Activated B cell treated with CpG ODN at 0.5 μM for 24 hours (primary cell): ENCODE measurements at regions of chr6 and their contacts with region 1.

Region 1: DNA sequence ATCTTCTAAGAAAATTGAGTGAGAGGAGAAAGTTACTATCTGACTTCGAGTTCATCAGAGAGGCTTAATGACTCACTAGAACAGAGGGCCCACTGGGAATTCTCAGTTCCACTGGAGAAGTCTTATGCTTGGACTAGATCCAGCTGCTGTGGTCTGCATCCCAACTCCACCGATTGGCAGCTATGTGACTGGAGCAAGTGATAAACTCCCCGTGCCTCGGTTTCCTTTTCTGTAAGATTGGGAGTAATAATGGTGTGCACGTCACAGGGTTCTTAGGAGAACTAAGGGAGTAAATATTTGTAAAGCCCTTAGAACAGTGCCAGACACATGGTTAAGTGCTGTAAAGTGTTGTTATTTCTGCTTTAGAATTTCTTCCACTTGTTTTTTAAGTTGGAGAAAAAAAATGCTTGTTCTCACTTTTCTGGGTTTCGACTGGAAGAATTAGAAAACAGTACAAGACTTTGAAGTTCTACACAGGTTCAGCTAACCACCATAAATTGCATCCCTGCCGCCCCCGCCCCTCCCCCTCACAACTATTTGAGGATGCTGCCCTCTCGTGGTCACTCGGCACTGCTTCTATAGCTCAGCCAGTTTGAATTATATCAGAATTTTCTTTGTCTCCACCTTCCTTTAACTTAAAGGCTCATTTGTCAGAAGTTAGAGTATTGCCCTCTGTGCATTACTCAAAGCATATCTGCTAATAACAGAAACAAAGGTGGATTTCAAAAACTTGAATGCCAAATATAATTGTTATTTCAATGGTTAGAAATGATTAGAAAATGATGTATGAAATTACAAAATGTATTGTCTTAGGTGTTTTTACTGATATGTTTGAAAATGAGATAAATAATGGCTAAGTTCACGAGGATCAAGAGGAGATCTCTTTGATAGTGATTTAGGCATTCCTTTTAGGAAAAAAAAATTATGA is 95.0 kb upstream of the IFNGR1 start:
- DNase-seq: peak; percentile 31
- ATAC-seq: peak; percentile 90
- H3K4me3 Mint-ChIP-seq: no peak overlapping the region
- H3K27ac Mint-ChIP-seq: no peak overlapping the region
- H3K4me1 Mint-ChIP-seq: peaks cover 30% of the 10 kb centered on the region
- H3K27me3 Mint-ChIP-seq: no peaks in the 10 kb centered on the region
- CTCF ChIP-seq: peak; percentile 66

Region 2: DNA sequence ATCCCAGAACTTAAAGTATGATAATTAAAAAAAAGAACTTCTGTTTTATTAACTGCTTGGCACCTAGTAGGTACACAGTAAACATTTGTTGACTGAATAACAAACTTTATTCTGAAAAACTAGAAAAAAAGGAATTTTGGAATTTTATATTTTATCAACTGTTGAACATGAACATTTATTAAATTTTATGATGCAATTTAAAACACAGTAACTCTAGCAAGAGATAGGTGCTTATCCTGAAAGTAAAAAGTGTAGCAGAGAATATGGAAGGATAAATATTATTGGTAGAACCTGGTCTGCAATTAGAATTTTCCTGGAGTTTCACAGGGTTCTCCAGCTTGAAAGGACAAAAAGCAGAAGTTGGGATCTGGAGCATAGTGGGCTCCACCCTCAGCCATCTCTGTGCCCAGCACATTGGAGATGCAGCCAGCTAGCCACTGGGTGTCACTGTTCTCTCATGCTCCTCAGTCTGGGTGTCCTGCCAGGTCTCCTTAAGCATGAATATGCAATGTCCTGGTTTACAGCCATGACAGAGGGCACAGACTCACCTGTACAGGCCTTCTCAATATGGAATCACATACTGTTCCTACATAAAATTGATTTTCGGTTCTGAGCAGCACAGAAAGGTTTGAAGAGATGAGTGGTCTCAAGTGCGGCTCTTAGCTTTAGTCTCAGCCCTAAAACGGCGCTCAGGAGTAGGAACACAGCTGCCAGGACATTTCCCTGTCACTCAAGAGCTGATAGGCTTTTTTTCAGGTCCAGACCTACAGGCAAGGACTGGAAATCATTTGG is 237.7 kb before region 1 on chr6:
- CTCF ChIA-PET with region 1: interaction called, 44 read pairs
- POLR2A ChIA-PET with region 1: no interaction called
- intact Hi-C with region 1: loop called (anchors 1 kb)
- DNase-seq: peak; percentile 39
- ATAC-seq: peak; percentile 100
- H3K4me3 Mint-ChIP-seq: no peak overlapping the region
- H3K27ac Mint-ChIP-seq: no peak overlapping the region
- H3K4me1 Mint-ChIP-seq: peaks cover 2% of the 10 kb centered on the region
- H3K27me3 Mint-ChIP-seq: peaks cover 2% of the 10 kb centered on the region
- CTCF ChIP-seq: peak; percentile 77

Region 3: DNA sequence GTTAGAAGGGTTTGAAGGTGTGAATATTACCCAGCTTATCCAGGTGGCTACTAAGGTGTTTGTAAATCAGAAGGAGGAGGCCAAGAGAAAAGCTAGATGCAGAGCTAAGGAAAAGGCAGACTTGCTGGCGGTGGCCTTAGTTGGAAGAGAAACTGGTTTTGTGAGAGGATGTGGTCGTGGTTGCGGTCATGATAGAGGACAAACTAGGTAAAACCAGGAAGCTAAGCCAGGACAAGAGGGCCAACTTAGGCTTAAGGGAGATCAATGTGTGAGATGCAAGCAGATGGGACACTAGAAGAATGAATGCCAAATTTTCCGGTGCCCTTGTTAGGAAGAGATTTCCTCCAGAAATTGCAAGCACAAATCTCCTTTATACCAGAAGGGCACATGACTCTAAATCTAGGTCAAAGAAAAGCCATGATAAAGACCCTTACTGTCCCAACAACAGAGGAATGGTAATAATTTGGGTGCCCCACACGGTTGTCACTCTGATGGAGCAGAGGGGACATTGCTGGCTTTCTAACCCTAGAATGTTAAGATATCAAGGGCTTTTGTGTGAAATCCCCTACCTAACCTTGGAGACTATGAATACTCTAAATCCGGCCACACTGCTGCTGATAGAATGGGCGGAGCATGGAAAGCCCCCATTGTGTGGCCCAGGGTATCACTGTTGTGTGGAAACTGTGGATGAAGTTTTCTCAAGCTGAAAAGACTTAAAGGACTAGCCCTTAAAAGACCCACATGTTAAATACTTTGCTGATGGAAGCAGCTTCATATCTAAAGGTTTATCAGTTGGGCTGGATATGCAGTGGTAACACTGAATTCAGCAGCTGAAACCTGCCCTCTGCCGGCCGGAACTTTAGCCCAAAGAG is 148.6 kb before region 1 on chr6:
- CTCF ChIA-PET with region 1: interaction called, 18 read pairs
- POLR2A ChIA-PET with region 1: interaction called, 3 read pairs
- intact Hi-C with region 1: loop called (anchors 1 kb)
- DNase-seq: peak; percentile 28
- ATAC-seq: peak; percentile 81
- H3K4me3 Mint-ChIP-seq: peak overlapping the region; percentile 45
- H3K27ac Mint-ChIP-seq: peak overlapping the region; percentile 92
- H3K4me1 Mint-ChIP-seq: peaks cover 75% of the 10 kb centered on the region
- H3K27me3 Mint-ChIP-seq: no peaks in the 10 kb centered on the region
- CTCF ChIP-seq: no peak

Region 4: DNA sequence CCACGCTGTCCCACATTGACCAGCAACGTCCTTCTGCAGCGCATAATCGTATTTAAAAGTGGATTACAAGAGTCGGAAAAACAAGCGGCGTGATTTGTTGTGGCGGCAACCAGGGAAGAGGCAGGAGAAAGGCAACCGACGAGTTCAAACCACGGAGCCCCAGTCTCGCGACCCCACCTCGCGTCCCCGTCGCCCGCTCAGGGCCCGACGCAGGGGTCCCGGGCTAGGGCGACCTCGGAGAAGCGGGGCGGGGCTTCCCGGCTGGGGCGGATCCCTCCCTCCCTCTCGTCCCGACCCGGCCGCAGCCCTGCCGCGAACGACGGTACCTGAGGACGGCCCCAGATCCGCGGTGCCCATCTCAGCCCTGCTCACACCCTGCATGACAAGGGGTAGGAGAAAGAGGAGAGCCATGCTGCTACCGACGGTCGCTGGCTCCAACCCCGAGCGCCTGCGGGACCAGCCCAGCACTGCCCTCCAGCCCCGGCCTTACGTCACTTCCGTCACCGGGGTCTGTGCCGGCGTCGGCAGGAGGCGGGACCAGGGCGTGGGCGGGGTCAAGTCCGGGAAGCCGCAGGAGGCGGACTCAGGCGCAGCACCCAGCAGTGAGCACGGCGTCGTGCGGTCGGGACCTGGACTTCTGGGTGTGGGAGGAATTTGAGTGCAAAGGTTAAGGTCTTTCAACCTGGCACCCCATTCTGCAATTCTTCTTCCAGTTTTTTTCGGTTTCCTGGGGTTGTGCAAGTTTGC is 95.1 kb before region 1 on chr6 and contains the start of gene IFNGR1:
- CTCF ChIA-PET with region 1: interaction called, 11 read pairs
- POLR2A ChIA-PET with region 1: interaction called, 3 read pairs
- intact Hi-C with region 1: loop called (anchors 1 kb)
- DNase-seq: peak; percentile 97
- ATAC-seq: peak; percentile 85
- H3K4me3 Mint-ChIP-seq: peak within 1 kb of the TSS; percentile 99
- H3K27ac Mint-ChIP-seq: peak within 1 kb of the TSS; percentile 98
- H3K4me1 Mint-ChIP-seq: peaks cover 83% of the 10 kb centered on the region
- H3K27me3 Mint-ChIP-seq: no peaks in the 10 kb centered on the region
- CTCF ChIP-seq: no peak
- total RNA-seq, gene IFNGR1: 60.5 and 65.6 TPM in 2 replicates

Region 5: DNA sequence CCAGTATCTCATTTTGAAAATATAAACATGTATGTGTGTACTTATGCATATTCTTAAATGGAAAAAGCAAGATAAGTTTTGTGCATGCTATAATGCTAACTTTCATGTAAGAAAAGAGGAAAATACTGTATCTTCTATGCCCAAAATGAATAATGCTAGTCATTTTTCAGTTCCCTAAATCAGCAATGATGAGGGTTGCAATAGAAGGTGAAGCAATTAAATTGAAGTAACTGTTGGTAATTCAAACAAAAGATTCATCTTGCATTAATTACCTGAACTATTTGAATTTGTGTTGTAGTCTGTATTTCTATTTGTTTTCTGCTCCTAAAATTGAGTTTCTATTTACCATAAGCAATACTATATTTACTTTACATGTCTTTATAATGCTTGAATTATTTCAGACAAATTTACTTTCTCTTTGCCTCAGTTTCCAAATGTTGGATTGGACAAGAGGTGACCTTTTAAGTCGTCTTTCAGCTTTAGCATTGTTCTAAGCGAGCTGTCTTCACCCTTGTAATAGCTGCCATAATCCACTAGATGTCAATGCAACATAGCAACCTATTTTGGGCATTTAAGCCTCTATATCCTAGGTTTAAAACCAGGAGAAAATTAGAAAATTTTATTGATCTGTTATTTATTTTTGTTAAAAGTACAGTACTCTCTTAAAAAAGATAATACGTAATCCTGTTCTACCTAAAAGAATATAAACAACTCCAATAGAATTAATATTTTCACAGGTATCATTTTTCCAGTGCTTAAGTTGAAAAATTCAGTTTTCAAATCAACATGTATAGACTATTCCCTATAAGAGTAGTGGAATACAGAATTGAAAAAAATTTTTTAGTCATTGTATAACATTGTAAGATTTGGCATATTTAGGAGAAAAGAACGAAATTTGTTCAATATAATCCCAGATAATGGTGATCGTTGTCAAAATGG is 42.7 kb before region 1 on chr6:
- CTCF ChIA-PET with region 1: interaction called, 43 read pairs
- POLR2A ChIA-PET with region 1: no interaction called
- intact Hi-C with region 1: loop called (anchors 1 kb)
- DNase-seq: no peak
- ATAC-seq: peak; percentile 75
- H3K4me3 Mint-ChIP-seq: no peak overlapping the region
- H3K27ac Mint-ChIP-seq: no peak overlapping the region
- H3K4me1 Mint-ChIP-seq: peaks cover 20% of the 10 kb centered on the region
- H3K27me3 Mint-ChIP-seq: no peaks in the 10 kb centered on the region
- CTCF ChIP-seq: peak; percentile 61

Region 6: DNA sequence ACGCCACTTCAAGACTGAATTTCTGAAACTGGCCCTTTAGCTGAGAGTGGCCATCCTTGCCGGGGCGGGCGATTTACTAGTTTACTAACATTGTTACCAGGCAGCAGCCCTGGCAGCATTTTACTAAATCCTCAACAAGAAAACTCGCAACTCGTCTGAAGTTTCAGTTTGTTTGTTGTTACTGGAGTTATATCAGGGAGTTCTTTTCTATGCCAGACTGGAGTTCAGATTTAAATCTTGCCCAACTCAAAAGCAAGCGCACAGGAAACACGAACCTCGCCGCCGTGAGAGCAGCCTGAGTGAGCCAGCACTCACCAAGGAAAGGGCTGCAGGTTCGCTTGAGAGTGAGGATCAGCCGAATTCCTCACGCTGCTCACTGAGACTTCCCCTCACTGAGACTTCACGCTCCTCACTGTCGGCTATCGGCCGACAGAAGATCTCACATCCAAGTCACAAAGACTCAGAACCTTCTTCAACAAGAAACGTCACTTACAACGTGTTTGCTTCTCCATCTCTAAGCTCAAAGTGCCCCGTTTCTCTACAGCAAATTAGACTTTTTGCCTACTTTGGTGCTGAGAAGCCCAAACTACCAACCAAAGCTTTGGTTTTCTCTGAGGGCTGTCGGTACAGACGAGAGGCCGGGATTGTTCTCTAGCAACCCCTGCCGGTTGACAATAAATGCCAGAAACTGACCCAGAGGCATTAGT is 101.1 kb after region 1 on chr6:
- CTCF ChIA-PET with region 1: interaction called, 14 read pairs
- POLR2A ChIA-PET with region 1: no interaction called
- intact Hi-C with region 1: loop called (anchors 1 kb)
- DNase-seq: peak; percentile 27
- ATAC-seq: peak; percentile 93
- H3K4me3 Mint-ChIP-seq: peak overlapping the region; percentile 84
- H3K27ac Mint-ChIP-seq: peak overlapping the region; percentile 61
- H3K4me1 Mint-ChIP-seq: peaks cover 11% of the 10 kb centered on the region
- H3K27me3 Mint-ChIP-seq: peaks cover 2% of the 10 kb centered on the region
- CTCF ChIP-seq: no peak

Region 7: GRCh38 chr6:138673346-138674014 is 1359.3 kb after region 1 on chr6:
- CTCF ChIA-PET with region 1: no interaction called
- POLR2A ChIA-PET with region 1: no interaction called
- intact Hi-C with region 1: no loop called
- DNase-seq: no peak
- ATAC-seq: no peak
- H3K4me3 Mint-ChIP-seq: no peak overlapping the region
- H3K27ac Mint-ChIP-seq: no peak overlapping the region
- H3K4me1 Mint-ChIP-seq: no peaks in the 10 kb centered on the region
- H3K27me3 Mint-ChIP-seq: peaks cover 5% of the 10 kb centered on the region
- CTCF ChIP-seq: no peak